ENCODE measurements at regions of chr20 and their contacts with region 1.

Region 1: GRCh38 chr20:43942661-43943290 is 28.1 kb downstream of the TOX2 start:
- DNase-seq: peak; percentile 73 to 86 (median 78)
- H3K4me3 ChIP-seq: peak overlapping the region in 1 of 3 experiments; percentile 58
- H3K4me3 Mint-ChIP-seq: peak overlapping the region; percentile 20 to 85
- H3K27ac ChIP-seq: peak overlapping the region; percentile 95
- H3K27ac Mint-ChIP-seq: peak overlapping the region; percentile 96 to 99 (median 98)
- H3K4me1 ChIP-seq: peaks cover 74 to 76% of the 10 kb centered on the region in 2 donors
- H3K4me1 Mint-ChIP-seq: peaks cover 79% of the 10 kb centered on the region
- H3K27me3 ChIP-seq: no peaks in the 10 kb centered on the region
- H3K27me3 Mint-ChIP-seq: peaks cover 0 to 5% (median 0%) of the 10 kb centered on the region in 3 donors
- CTCF ChIP-seq: no peak

Region 2: GRCh38 chr20:43749734-43750294 is 193.0 kb before region 1 on chr20:
- intact Hi-C with region 1: loop called in 1 of 2 experiments (anchors 5 kb)
- DNase-seq: peak; percentile 50 to 70 (median 67)
- H3K4me3 ChIP-seq: no peak overlapping the region
- H3K4me3 Mint-ChIP-seq: peak overlapping the region in 1 of 2 donors; percentile 57
- H3K27ac ChIP-seq: no peak overlapping the region
- H3K27ac Mint-ChIP-seq: peak overlapping the region in 1 of 7 donors; percentile 18
- H3K4me1 ChIP-seq: peaks cover 78 to 83% of the 10 kb centered on the region in 2 donors
- H3K4me1 Mint-ChIP-seq: peaks cover 71% of the 10 kb centered on the region
- H3K27me3 ChIP-seq: peaks cover 9 to 25% of the 10 kb centered on the region in 2 donors
- H3K27me3 Mint-ChIP-seq: peaks cover 24 to 46% (median 36%) of the 10 kb centered on the region in 3 donors
- CTCF ChIP-seq: peak; percentile 99

Region 3: DNA sequence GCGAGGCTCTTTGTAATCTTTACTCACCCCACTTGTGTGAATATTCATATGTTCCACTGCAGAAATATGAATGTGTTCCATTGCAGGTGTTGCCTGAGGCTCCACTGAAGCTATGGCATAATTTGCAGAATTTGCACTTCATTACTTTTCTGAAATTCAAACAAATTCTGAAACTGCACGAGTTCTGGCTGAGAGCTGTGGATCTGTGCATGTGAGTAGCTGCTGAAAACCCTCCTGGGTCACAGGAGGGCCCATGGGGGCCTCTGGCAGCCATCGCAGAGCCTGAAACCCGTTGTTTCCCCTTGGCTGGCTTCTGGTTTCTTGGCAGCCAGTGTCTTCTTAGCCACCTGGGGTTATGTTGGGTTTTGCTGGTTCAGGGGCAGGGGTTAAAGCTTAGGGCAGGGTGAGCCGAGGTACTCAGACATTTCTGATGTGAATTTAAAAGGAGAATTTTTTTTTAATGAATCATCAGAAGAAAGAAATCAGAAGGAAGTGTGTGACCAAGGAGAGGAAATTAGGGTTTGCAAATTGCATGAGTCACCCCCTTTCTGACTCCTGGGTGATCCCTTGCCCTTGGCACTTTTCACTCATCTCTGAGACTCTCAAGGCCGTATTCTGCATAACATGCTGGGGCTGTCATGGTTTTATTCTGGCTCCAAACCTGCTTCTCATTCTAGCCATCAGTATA is 12.4 kb after region 1 on chr20:
- intact Hi-C with region 1: loop called in 1 of 2 experiments (anchors 1 kb)
- DNase-seq: peak; percentile 81 to 89 (median 89)
- H3K4me3 ChIP-seq: peak overlapping the region in 1 of 3 experiments; percentile 61
- H3K4me3 Mint-ChIP-seq: peak overlapping the region; percentile 42 to 70
- H3K27ac ChIP-seq: peak overlapping the region; percentile 60 to 78
- H3K27ac Mint-ChIP-seq: peak overlapping the region; percentile 84 to 92 (median 88)
- H3K4me1 ChIP-seq: peaks cover 67 to 72% of the 10 kb centered on the region in 2 donors
- H3K4me1 Mint-ChIP-seq: peaks cover 82% of the 10 kb centered on the region
- H3K27me3 ChIP-seq: peaks cover 0 to 5% of the 10 kb centered on the region in 2 donors
- H3K27me3 Mint-ChIP-seq: peaks cover 10 to 32% (median 30%) of the 10 kb centered on the region in 3 donors
- CTCF ChIP-seq: no peak

Region 4: GRCh38 chr20:43975096-43975768 is 32.5 kb after region 1 on chr20:
- intact Hi-C with region 1: loop called in 1 of 2 experiments (anchors 5 kb)
- DNase-seq: no peak
- H3K4me3 ChIP-seq: no peak overlapping the region
- H3K4me3 Mint-ChIP-seq: no peak overlapping the region
- H3K27ac ChIP-seq: no peak overlapping the region
- H3K27ac Mint-ChIP-seq: no peak overlapping the region
- H3K4me1 ChIP-seq: peaks cover 17 to 18% of the 10 kb centered on the region in 2 donors
- H3K4me1 Mint-ChIP-seq: peaks cover 20% of the 10 kb centered on the region
- H3K27me3 ChIP-seq: peaks cover 9 to 13% of the 10 kb centered on the region in 2 donors
- H3K27me3 Mint-ChIP-seq: peaks cover 34 to 40% (median 38%) of the 10 kb centered on the region in 3 donors
- CTCF ChIP-seq: no peak

Region 5: DNA sequence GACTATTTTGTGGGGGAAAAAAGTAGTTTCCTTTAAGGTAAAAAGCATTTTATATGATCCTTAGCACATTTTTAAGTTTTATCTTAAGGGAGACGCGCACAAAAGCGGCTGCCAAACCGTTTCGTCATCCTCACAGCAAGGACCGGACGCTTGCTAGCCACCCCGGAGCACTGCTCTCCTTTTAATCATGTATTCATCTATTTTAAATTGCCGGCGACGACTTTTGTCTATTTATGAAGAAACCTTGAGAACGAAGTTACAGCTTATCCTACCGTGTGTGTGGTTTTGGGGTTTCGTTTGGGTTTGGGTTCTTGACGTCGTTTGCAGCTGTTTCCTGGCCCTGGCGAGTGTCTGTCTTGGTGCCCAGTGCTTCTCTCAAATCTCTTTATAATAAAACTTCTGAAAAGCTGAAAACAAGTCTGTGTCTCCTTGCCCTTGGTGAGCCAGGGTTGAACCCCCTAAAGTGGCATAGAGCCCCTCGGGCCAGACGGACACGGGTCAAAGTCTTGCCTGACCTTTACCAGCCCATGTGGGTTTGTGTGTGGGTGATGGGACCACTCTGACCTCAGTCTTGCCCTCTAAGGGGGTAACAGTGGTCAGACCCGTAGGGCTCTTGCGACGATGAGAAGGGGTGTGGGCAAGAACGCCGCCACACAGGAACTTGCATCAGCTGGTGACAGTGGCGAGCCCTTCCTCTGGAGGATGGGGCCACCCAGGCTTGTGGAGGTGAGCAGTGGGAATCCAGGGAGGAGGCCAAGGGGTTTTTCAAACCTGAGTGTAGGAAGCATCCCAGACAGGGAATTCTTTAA is 126.6 kb after region 1 on chr20:
- intact Hi-C with region 1: loop called in 1 of 2 experiments (anchors 10 kb)
- DNase-seq: peak; percentile 56 to 73 (median 60)
- H3K4me3 ChIP-seq: peak overlapping the region; percentile 28 to 71 (median 43)
- H3K4me3 Mint-ChIP-seq: peak overlapping the region; percentile 82 to 95
- H3K27ac ChIP-seq: peak overlapping the region; percentile 94 to 95
- H3K27ac Mint-ChIP-seq: peak overlapping the region; percentile 93 to 99 (median 97)
- H3K4me1 ChIP-seq: peaks cover 61 to 73% of the 10 kb centered on the region in 2 donors
- H3K4me1 Mint-ChIP-seq: peaks cover 63% of the 10 kb centered on the region
- H3K27me3 ChIP-seq: no peaks in the 10 kb centered on the region
- H3K27me3 Mint-ChIP-seq: peaks cover 1 to 7% (median 7%) of the 10 kb centered on the region in 3 donors
- CTCF ChIP-seq: no peak